HepG2 (cell line): ENCODE measurements at regions of chr2 and their contacts with region 1.

Region 1: DNA sequence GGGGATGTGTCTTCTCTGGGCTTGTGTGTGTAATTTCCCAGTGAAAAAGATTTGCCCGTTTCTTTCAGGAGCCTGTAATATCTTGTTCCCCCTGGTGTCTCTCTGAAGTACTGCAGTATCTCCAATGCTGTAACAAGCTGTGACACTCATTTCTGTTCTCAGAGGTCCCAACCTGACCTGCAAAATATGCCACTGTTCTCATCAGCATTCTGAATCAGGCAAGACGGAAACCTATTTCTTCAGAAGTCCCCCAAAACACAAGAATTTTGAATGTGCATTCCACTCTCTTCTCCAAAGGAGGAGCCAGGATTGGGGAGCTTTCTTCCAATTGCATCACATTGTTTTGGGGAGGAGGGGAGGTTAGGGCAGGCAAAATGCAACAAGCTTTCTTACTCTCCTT is 77.0 kb upstream of the CNGA3 start:
- DNase-seq: peak; percentile 44
- ATAC-seq: peak; percentile 80
- H3K4me3 ChIP-seq: no peak overlapping the region
- H3K27ac ChIP-seq: no peak overlapping the region
- H3K4me1 ChIP-seq: no peaks in the 10 kb centered on the region
- H3K27me3 ChIP-seq: peaks cover 0 to 13% of the 10 kb centered on the region in 2 experiments; a peak in 3 of 5 replicates
- CTCF ChIP-seq: peak; percentile 76
- EP300 ChIP-seq: no peak
- POLR2A ChIP-seq: no peak
- RAD21 ChIP-seq: peak; percentile 69

Region 2: DNA sequence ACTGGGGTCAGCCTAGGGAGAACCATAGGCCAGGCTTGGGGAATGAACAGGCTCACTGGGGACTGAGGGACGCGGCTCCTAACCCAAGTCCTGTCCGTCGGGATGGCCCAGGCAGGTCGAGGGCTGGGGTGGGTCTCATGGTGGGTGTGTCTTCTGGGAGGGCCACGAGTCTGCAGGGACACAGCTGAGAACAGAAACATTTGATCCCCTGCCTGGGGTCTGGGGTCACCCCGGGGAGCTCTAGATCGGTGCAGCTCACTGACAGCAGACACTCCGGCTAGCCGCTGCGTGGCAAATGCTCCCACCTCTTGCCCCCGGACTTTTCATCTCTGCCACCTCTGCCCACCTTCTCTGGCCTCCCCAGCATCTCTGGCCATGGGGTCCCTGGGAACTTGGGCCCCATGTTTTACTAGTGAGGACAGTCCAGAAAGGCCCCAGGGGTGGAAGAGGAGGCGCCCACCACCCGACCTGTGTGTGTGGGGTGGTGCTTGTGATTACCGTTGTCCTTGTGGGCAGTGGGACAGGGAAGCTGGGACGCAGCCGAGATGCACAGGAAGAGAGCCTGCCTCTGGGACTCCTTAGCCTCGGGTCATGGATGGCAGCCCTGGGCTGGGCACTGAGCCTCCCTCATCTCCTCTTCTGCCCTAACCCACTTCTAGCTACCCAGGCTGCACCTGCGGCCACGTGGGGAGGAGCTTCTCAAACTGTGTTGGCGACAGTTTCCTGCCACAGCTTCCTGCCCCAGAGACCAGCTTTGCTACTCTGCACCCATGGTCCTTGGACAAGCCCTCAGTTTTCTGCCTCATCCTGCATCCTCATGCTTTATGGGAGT is 551.0 kb before region 1 on chr2:
- CTCF ChIA-PET with region 1: no interaction called
- POLR2A ChIA-PET with region 1: no interaction called
- in situ Hi-C with region 1: no loop called
- intact Hi-C with region 1: loop called (anchors 10 kb)
- DNase-seq: no peak
- ATAC-seq: no peak; the same call in 2 of the 3 replicates
- H3K4me3 ChIP-seq: no peak overlapping the region
- H3K27ac ChIP-seq: no peak overlapping the region
- H3K4me1 ChIP-seq: peaks cover 8% of the 10 kb centered on the region
- H3K27me3 ChIP-seq: peaks cover 0 to 12% of the 10 kb centered on the region in 2 experiments; a peak in 2 of 5 replicates
- CTCF ChIP-seq: no peak
- EP300 ChIP-seq: no peak
- POLR2A ChIP-seq: no peak
- RAD21 ChIP-seq: no peak

Region 3: DNA sequence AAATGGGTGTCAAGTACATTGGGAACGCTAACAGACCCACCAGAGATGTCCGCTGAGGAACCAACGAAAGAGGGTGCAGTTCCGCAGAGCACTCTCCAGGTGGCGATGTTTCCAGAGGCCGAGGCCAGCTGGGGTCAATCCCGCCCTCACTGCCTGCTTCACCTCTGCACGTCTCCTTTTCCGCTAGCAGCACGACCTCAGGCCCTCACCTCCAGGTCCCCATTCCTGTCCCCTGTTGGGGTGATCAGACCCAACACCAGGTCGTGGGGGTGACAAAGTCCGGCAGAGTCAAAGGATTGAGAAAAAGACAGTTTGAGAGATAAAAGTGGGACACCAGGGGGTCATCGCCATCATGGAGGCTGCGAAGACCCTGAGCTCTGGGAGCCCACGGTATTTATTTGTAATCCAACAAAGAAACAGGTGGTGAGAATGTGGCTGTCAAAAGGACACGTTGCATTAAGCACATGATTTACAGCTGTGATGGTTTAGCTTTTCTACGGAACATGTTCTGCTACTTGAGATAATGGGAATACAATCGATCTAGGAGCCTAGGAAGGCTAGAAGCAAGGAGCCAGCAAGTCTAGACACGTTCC is 528.6 kb before region 1 on chr2:
- CTCF ChIA-PET with region 1: interaction called, 10 read pairs
- POLR2A ChIA-PET with region 1: no interaction called
- in situ Hi-C with region 1: no loop called
- intact Hi-C with region 1: loop called (anchors 1 kb)
- DNase-seq: peak; percentile 54
- ATAC-seq: peak; percentile 71
- H3K4me3 ChIP-seq: peak overlapping the region in 1 of 3 experiments; percentile 44; a peak in 1 of 6 replicates
- H3K27ac ChIP-seq: no peak overlapping the region
- H3K4me1 ChIP-seq: peaks cover 35% of the 10 kb centered on the region
- H3K27me3 ChIP-seq: peaks cover 2 to 27% of the 10 kb centered on the region in 2 experiments; a peak in 4 of 5 replicates
- CTCF ChIP-seq: peak; percentile 95
- EP300 ChIP-seq: no peak
- POLR2A ChIP-seq: no peak
- RAD21 ChIP-seq: peak; percentile 76

Region 4: DNA sequence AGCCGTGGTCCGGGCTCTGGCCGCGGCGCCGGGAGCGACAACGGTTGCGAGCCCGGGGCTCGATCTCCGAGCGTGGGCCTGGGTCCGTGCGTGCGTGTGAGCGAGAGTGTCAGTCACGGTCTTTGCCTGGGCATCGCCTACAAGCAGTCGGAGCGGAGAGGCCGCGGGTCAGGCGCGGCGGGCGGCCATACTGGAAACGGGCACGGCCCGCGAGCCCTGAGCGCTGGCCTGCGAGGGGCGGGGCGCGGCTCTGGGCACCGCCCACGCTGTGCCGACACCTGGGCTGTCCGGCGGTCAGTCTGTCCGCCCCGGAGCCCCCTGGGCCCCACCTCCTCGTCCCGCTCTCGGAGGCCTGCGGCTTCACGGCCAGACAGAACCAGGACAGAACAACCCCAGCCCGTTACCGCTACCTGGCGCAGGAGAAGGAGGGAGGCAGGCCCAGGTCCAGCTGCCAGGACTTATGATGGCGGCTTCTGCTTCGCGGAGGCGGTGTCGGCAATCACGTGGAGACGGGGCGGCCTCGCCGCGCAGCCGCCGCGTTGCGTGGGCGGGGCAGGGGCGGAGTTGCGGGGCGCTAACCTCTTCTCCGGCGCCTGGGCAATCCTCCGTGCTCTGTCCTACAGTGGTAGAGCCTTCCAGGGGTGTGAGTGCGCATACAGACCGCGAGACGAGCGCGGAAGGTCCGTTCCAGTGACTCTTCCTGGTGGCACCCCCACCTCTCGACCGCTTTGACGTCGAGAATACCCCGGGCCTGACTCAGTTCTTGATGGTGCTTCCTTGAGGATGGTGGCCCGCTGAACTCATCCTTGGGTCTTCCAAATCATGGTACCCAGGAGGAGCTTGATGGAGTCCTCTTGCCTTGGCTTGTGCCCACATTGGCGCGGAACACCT is 273.3 kb before region 1 on chr2 and contains the start of gene TMEM131:
- CTCF ChIA-PET with region 1: no interaction called
- POLR2A ChIA-PET with region 1: no interaction called
- in situ Hi-C with region 1: no loop called
- intact Hi-C with region 1: loop called (anchors 10 kb)
- DNase-seq: peak; percentile 88
- ATAC-seq: peak; percentile 93
- H3K4me3 ChIP-seq: peak within 1 kb of the TSS; percentile 86 to 100 (median 98)
- H3K27ac ChIP-seq: peak within 1 kb of the TSS; percentile 96
- H3K4me1 ChIP-seq: peaks cover 70% of the 10 kb centered on the region
- H3K27me3 ChIP-seq: no peaks in the 10 kb centered on the region; a peak in 1 of 5 replicates
- CTCF ChIP-seq: no peak; the same call in 1 of the 2 replicates
- EP300 ChIP-seq: peak in 1 of 2 experiments; percentile 3; a peak in 1 of 4 replicates
- POLR2A ChIP-seq: peak; percentile 81 to 90
- RAD21 ChIP-seq: 0 out of 2 replicates have a peak, but pooled peaks have one; percentile 17
- total RNA-seq, gene TMEM131: 17.4 and 19.5 TPM in 2 replicates

Region 5: DNA sequence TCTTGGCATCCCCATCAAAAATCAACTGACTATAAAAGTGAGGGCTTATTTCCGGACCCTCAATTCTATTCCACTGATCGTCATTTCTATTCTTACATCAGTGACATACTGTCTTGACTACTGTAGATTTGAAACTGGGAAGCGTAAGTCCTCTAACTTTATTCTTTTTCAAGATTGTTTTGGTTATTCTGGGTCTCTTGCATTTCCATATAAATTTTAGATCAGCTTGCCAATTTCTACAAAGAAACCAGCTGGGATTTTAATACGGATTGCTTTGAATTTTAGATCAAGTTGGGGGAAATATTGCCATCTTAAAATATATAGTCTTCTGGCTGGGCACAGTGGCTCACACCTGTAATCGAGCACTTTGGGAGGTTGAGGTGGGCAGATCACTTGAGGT is 157.5 kb after region 1 on chr2:
- CTCF ChIA-PET with region 1: no interaction called
- POLR2A ChIA-PET with region 1: no interaction called
- in situ Hi-C with region 1: no loop called
- intact Hi-C with region 1: no loop called
- DNase-seq: no peak
- ATAC-seq: no peak
- H3K4me3 ChIP-seq: no peak overlapping the region
- H3K27ac ChIP-seq: no peak overlapping the region
- H3K4me1 ChIP-seq: no peaks in the 10 kb centered on the region
- H3K27me3 ChIP-seq: peaks cover 0 to 21% of the 10 kb centered on the region in 2 experiments; a peak in 3 of 5 replicates
- CTCF ChIP-seq: no peak
- EP300 ChIP-seq: no peak
- POLR2A ChIP-seq: no peak
- RAD21 ChIP-seq: no peak

Region 6: GRCh38 chr2:98702127-98702802 is 433.0 kb after region 1 on chr2:
- CTCF ChIA-PET with region 1: no interaction called
- POLR2A ChIA-PET with region 1: no interaction called
- in situ Hi-C with region 1: no loop called
- intact Hi-C with region 1: no loop called
- DNase-seq: peak; percentile 91
- ATAC-seq: peak; percentile 99
- H3K4me3 ChIP-seq: peak overlapping the region; percentile 21 to 55 (median 29)
- H3K27ac ChIP-seq: peak overlapping the region; percentile 88
- H3K4me1 ChIP-seq: peaks cover 63% of the 10 kb centered on the region
- H3K27me3 ChIP-seq: no peaks in the 10 kb centered on the region
- CTCF ChIP-seq: peak; percentile 41
- EP300 ChIP-seq: peak in 1 of 2 experiments; percentile 73; a peak in 2 of 4 replicates
- POLR2A ChIP-seq: peak; percentile 74 to 82
- RAD21 ChIP-seq: peak; percentile 28; the same call in 1 of the 2 replicates